ENCODE measurements at regions of chr16 and their contacts with region 1.

Region 1: DNA sequence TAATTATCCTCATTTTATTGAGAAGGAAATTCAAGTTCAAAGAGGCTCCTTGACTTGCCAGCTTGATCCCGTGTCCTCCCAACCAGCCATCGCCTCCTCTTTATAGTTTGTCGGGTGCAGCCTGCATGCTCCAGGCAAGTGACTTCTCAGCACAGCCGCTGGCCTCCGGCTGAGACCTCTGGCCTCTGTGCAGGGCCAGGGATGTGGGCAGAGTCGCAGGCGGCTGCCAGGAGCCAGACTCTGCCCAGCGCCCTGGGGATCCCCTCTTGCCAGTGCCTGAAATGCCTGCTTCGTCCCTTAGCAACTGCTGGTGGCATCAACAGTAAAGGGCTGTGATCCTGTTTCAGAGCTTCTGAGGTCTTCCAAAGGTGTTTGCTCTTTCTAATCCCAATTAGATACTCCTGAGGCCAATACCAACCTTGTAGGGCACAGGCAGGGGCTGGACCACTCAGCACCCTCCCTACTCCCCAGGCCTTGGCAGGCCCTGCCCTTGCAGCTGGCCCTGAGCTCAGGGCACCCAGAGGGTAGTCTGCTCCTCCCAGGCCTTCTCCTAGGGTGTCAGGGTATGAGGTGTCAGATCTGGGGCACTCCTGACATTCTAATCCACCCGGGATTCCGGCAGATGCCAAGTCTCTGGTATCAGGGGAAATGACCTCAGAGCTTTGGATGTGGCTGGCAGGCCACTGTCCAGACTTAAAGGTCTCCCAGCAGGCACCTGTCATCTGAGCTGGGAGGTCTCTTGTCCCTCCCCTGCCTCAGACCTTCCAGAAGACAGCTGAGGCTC is 68.0 kb upstream of the SIAH1 start:
- DNase-seq: no peak
- ATAC-seq: no peak
- H3K4me3 ChIP-seq: no peak overlapping the region
- H3K4me3 Mint-ChIP-seq: no peak overlapping the region
- H3K27ac ChIP-seq: no peak overlapping the region
- H3K27ac Mint-ChIP-seq: peak overlapping the region; percentile 26
- H3K4me1 ChIP-seq: peaks cover 13 to 31% of the 10 kb centered on the region in 2 donors
- H3K4me1 Mint-ChIP-seq: peaks cover 28% of the 10 kb centered on the region
- H3K27me3 ChIP-seq: no peaks in the 10 kb centered on the region
- H3K27me3 Mint-ChIP-seq: no peaks in the 10 kb centered on the region
- CTCF ChIP-seq: no peak

Region 2: DNA sequence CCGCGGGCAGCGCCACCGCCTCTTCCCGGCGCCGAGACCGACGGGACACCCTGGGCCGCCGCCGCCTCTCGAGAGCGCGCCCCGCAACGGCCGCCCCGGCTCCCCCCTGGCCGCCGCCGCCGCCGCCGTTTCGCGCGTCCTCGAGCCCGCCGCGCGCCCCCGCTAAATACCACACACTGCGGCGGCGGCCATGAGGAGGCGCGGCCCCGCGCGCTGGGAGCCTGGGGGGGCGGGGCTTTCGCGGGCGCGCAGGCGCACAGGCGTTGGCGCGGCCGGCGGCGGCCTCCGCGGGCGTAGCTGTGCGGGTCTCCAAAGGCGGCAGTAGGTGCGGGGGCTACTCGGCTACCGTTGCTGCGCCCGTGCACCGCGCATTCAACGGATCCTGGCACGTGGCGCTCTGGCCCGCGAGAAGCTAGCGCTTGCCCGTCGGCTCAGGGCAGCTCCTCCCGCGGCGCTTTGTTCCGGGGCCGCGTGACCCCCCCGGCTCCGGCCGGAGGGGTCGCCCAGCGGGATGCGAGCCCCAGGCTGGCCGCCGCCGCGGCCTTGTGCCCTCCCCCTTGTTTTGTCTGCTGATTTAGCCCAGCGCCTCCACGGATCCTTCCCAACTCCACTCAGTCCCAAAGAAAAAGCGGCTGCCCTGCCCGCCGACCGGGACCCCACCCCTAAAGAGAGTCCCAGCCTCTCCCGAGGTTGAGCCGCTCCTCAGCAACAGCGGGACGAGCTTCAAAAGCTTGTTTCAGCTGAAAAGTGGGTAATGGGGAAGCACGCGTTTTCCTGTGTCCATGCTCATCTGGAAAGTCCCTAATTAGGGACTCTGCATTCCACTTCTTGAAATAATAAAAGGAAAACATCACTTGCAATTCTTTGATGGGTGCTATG is 67.7 kb before region 1 on chr16 and contains the start of gene SIAH1:
- CTCF ChIA-PET with region 1: no interaction called
- POLR2A ChIA-PET with region 1: interaction called, 4 read pairs
- intact Hi-C with region 1: loop called (anchors 1 kb)
- DNase-seq: peak; percentile 94
- ATAC-seq: peak; percentile 81
- H3K4me3 ChIP-seq: peak within 1 kb of the TSS; percentile 66 to 95 (median 93)
- H3K4me3 Mint-ChIP-seq: peak within 1 kb of the TSS; percentile 93
- H3K27ac ChIP-seq: peak within 1 kb of the TSS; percentile 69 to 88
- H3K27ac Mint-ChIP-seq: peak within 1 kb of the TSS; percentile 92
- H3K4me1 ChIP-seq: peaks cover 17 to 23% of the 10 kb centered on the region in 2 donors
- H3K4me1 Mint-ChIP-seq: peaks cover 25% of the 10 kb centered on the region
- H3K27me3 ChIP-seq: no peaks in the 10 kb centered on the region
- H3K27me3 Mint-ChIP-seq: no peaks in the 10 kb centered on the region
- CTCF ChIP-seq: no peak
- total RNA-seq, gene SIAH1: 47.6 and 54.7 TPM in 2 replicates

Region 3: GRCh38 chr16:48432136-48432535 is 21.0 kb before region 1 on chr16:
- CTCF ChIA-PET with region 1: interaction called, 5 read pairs
- POLR2A ChIA-PET with region 1: interaction called, 13 read pairs
- intact Hi-C with region 1: loop called (anchors 1 kb)
- DNase-seq: peak; percentile 80
- ATAC-seq: peak; percentile 86
- H3K4me3 ChIP-seq: peak overlapping the region in 1 of 5 experiments; percentile 38
- H3K4me3 Mint-ChIP-seq: peak overlapping the region; percentile 87
- H3K27ac ChIP-seq: peak overlapping the region; percentile 81 to 89
- H3K27ac Mint-ChIP-seq: peak overlapping the region; percentile 100
- H3K4me1 ChIP-seq: peaks cover 55 to 65% of the 10 kb centered on the region in 2 donors
- H3K4me1 Mint-ChIP-seq: peaks cover 71% of the 10 kb centered on the region
- H3K27me3 ChIP-seq: no peaks in the 10 kb centered on the region
- H3K27me3 Mint-ChIP-seq: no peaks in the 10 kb centered on the region
- CTCF ChIP-seq: no peak

Region 4: DNA sequence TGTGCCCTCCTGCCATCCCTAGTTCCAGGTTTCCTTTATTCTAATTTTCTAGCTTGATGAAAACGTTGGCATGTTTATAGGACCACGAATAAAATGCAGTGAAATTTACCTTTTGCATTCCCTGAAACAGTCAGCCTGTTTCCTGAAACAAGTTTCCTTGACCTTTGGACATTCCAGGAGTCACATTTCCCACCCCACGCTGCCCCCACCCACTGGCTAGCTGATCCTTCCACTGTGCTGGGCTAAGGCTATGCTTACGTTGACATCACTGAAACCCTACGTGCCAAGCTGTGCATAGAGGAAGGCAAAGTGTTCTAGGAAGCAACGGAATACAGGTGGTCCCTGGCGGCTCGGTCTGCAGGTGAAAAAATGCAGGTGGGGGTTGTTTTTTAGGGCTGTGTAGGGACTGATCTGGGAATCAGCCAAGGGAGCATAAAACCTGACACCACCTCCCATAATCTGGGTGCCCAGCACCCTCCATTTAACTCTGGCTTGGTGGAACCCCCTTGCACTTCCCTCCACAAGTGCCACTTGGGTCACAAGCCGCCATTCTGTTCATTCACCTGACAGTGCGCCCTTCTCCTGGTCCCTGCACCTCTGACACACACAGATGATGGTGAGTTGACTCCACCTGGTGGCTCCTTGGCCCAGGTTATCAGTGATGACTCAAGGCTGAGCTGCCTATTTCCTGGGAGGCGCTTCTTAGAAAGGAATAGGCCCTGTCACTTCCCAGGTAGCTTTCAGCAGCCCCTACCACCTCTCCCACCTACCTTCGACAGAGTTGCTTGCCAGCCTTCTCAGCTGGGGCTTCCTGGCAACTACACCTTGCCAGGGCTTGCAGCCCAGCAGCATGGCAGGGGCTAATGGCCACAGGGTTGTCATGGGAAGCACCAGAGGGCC is 73.1 kb after region 1 on chr16:
- CTCF ChIA-PET with region 1: no interaction called
- POLR2A ChIA-PET with region 1: no interaction called
- intact Hi-C with region 1: loop called (anchors 10 kb)
- DNase-seq: peak; percentile 61
- ATAC-seq: peak; percentile 80
- H3K4me3 ChIP-seq: no peak overlapping the region
- H3K4me3 Mint-ChIP-seq: no peak overlapping the region
- H3K27ac ChIP-seq: no peak overlapping the region
- H3K27ac Mint-ChIP-seq: peak overlapping the region; percentile 26
- H3K4me1 ChIP-seq: peaks cover 0 to 13% of the 10 kb centered on the region in 2 donors
- H3K4me1 Mint-ChIP-seq: peaks cover 18% of the 10 kb centered on the region
- H3K27me3 ChIP-seq: no peaks in the 10 kb centered on the region
- H3K27me3 Mint-ChIP-seq: no peaks in the 10 kb centered on the region
- CTCF ChIP-seq: peak; percentile 38